CD4-positive, alpha-beta memory T cell (primary cell): ENCODE measurements at regions of chr2 and their contacts with region 1.

Region 1: GRCh38 chr2:68774569-68775271 is 40.1 kb downstream of the ARHGAP25 start:
- DNase-seq: peak; percentile 47 to 79 (median 51)
- H3K4me3 ChIP-seq: peak overlapping the region; percentile 57 to 63
- H3K4me3 Mint-ChIP-seq: peak overlapping the region; percentile 84 to 95 (median 87)
- H3K27ac ChIP-seq: peak overlapping the region; percentile 84
- H3K27ac Mint-ChIP-seq: peak overlapping the region; percentile 95 to 99 (median 97)
- H3K4me1 ChIP-seq: peaks cover 97% of the 10 kb centered on the region
- H3K4me1 Mint-ChIP-seq: peaks cover 78 to 90% (median 86%) of the 10 kb centered on the region in 4 donors
- H3K27me3 ChIP-seq: no peaks in the 10 kb centered on the region
- H3K27me3 Mint-ChIP-seq: no peaks in the 10 kb centered on the region

Region 2: DNA sequence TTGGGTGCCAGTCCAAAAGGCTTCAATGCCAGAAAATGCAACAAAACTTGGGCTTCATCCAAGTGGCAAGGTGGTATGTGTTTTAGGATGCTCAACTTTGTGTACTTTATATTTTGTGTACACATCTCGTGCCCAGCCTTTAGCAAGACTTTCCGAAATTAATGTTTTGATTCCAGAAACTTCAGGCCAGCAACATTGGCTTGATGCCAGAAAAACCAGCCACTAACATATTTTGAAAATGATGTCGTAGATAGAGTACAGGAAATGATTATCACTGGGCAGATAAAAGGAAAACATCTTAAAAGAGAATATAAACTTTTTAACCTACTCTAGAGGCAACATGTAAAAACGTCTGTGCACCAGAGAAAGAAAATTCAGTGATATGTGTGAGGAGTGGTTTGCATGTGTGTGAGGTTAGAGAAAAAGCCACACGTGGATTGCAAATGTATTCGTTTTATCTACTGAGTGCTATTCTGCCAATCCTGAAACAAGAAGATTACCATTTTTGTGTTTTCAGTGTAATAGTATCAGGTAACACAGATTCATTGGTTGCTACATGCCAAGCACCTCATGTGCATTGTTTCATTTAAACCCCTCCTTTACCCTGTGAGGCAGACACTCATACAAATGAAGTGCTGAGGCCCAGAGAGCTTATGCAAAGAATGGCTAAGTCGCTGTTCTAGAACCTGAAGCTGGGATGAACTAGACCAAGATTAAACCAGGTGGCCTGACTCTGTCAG is 976.7 kb before region 1 on chr2:
- CTCF ChIA-PET with region 1: no interaction called
- POLR2A ChIA-PET with region 1: no interaction called
- intact Hi-C with region 1: no loop called
- DNase-seq: no peak
- H3K4me3 ChIP-seq: no peak overlapping the region
- H3K4me3 Mint-ChIP-seq: no peak overlapping the region
- H3K27ac ChIP-seq: no peak overlapping the region
- H3K27ac Mint-ChIP-seq: no peak overlapping the region
- H3K4me1 ChIP-seq: no peaks in the 10 kb centered on the region
- H3K4me1 Mint-ChIP-seq: no peaks in the 10 kb centered on the region
- H3K27me3 ChIP-seq: no peaks in the 10 kb centered on the region
- H3K27me3 Mint-ChIP-seq: peaks cover 5 to 9% of the 10 kb centered on the region in 2 donors

Region 3: DNA sequence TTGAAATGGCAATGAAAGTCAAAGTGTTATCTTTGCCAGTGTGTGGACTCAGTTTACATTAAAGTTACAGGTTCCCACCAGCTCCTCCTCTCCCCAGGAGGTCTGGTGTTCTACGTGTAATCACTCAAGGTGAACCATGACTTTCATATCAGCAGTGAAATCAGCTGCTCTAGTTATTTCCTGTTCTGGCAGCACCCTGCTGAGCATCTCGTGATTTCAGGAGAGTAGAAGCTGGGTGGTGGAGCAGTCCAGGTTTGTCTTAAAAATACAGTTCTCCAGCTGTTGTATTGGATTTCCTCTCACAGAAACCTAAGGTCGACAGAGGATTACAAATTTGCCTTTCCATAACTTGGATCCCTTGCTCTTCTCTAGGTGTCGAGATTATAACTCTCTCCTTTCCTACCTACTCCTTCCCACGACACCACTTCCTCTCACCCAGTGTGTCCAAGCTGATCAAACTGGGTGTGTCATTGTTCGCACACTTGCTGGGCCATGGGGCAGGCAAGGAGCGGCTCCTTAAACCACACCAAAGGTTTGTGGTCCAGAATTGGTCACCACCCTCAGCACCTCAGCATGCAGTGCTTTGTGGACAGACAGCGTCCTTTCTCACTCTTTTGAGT is 53.1 kb before region 1 on chr2:
- CTCF ChIA-PET with region 1: interaction called, 22 read pairs
- POLR2A ChIA-PET with region 1: interaction called, 23 read pairs
- intact Hi-C with region 1: loop called (anchors 2 kb)
- DNase-seq: peak; percentile 64 to 78 (median 70)
- H3K4me3 ChIP-seq: peak overlapping the region in 1 of 2 donors; percentile 6
- H3K4me3 Mint-ChIP-seq: peak overlapping the region; percentile 63 to 89 (median 83)
- H3K27ac ChIP-seq: peak overlapping the region; percentile 54
- H3K27ac Mint-ChIP-seq: peak overlapping the region; percentile 91 to 98 (median 96)
- H3K4me1 ChIP-seq: peaks cover 96% of the 10 kb centered on the region
- H3K4me1 Mint-ChIP-seq: peaks cover 75 to 99% (median 90%) of the 10 kb centered on the region in 4 donors
- H3K27me3 ChIP-seq: no peaks in the 10 kb centered on the region
- H3K27me3 Mint-ChIP-seq: no peaks in the 10 kb centered on the region

Region 4: DNA sequence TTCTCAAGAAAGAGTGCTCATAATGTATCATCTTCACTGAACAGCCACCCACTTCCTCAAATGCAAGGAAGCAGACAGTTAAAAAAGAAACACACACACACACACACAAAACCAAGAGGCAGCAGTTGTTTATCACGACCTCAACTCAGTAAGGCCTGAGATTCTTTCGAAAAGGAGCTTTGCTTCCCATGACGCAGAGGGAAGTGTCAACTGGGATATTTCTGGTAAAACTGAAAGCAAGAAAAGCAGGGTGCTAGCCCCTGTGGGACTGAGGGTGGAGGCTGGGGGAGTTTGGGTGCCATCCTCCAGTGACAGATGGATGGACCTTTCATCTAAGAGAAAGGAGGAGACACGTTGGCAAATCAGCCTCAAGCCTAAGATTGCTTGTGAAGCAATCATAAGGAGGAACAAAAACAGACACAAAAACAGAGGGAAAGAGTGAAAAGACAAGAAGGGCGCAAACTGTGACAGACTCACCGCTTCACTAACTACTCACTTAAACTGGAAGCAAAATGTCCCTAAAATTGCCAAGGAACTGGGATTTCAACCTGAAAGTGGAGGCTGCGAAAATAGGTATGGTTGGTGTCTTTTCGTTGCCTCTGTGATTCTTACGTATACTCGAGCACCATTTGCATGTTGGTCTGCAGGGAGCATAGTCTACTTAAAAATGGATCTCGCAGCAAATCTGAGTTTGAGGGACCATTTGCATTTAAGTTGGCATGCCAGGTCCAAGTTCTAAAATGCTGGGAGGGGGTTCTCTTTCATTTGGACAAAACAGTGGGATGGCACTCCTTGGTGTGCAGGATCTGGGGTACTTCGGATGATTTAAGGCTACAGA is 39.8 kb before region 1 on chr2 and contains the start of gene ARHGAP25:
- CTCF ChIA-PET with region 1: interaction called, 526 read pairs
- POLR2A ChIA-PET with region 1: interaction called, 728 read pairs
- intact Hi-C with region 1: no loop called
- DNase-seq: peak; percentile 58 to 79 (median 61)
- H3K4me3 ChIP-seq: peak within 1 kb of the TSS; percentile 83 to 99
- H3K4me3 Mint-ChIP-seq: no peak within 1 kb of the TSS
- H3K27ac ChIP-seq: peak within 1 kb of the TSS; percentile 81
- H3K27ac Mint-ChIP-seq: no peak within 1 kb of the TSS
- H3K4me1 ChIP-seq: peaks cover 54% of the 10 kb centered on the region
- H3K4me1 Mint-ChIP-seq: peaks cover 23 to 44% (median 34%) of the 10 kb centered on the region in 4 donors
- H3K27me3 ChIP-seq: no peaks in the 10 kb centered on the region
- H3K27me3 Mint-ChIP-seq: no peaks in the 10 kb centered on the region
- total RNA-seq, gene ARHGAP25: 162 to 163 TPM

Region 5: GRCh38 chr2:68789603-68790002 is 14.9 kb after region 1 on chr2:
- CTCF ChIA-PET with region 1: interaction called, 12 read pairs
- POLR2A ChIA-PET with region 1: interaction called, 19 read pairs
- intact Hi-C with region 1: loop called (anchors 2 kb)
- DNase-seq: no peak
- H3K4me3 ChIP-seq: no peak overlapping the region
- H3K4me3 Mint-ChIP-seq: peak overlapping the region in 2 of 8 donors; percentile 4 to 12
- H3K27ac ChIP-seq: peak overlapping the region; percentile 15
- H3K27ac Mint-ChIP-seq: peak overlapping the region in 6 of 7 donors; percentile 71 to 90 (median 82)
- H3K4me1 ChIP-seq: peaks cover 78% of the 10 kb centered on the region
- H3K4me1 Mint-ChIP-seq: peaks cover 41 to 53% (median 48%) of the 10 kb centered on the region in 4 donors
- H3K27me3 ChIP-seq: no peaks in the 10 kb centered on the region
- H3K27me3 Mint-ChIP-seq: no peaks in the 10 kb centered on the region

Region 6: GRCh38 chr2:68796294-68796905 is 21.7 kb after region 1 on chr2:
- CTCF ChIA-PET with region 1: interaction called, 12 read pairs
- POLR2A ChIA-PET with region 1: interaction called, 19 read pairs
- intact Hi-C with region 1: loop called (anchors 2 kb)
- DNase-seq: peak in 4 of 5 donors; percentile 17 to 35 (median 33)
- H3K4me3 ChIP-seq: peak overlapping the region in 1 of 2 donors; percentile 13
- H3K4me3 Mint-ChIP-seq: peak overlapping the region; percentile 2 to 88 (median 68)
- H3K27ac ChIP-seq: peak overlapping the region; percentile 47
- H3K27ac Mint-ChIP-seq: peak overlapping the region; percentile 78 to 94 (median 86)
- H3K4me1 ChIP-seq: peaks cover 81% of the 10 kb centered on the region
- H3K4me1 Mint-ChIP-seq: peaks cover 73 to 93% (median 81%) of the 10 kb centered on the region in 4 donors
- H3K27me3 ChIP-seq: no peaks in the 10 kb centered on the region
- H3K27me3 Mint-ChIP-seq: no peaks in the 10 kb centered on the region